GM12878 (cell line): ENCODE measurements at regions of chrX and their contacts with region 1.

Region 1: GRCh38 chrX:41275661-41276609 is 58.0 kb upstream of the DDX3X start:
- DNase-seq: no peak
- ATAC-seq: peak; percentile 92
- H3K4me3 ChIP-seq: peak overlapping the region; percentile 61
- H3K27ac ChIP-seq: peak overlapping the region; percentile 30
- H3K4me1 ChIP-seq: no peaks in the 10 kb centered on the region
- H3K27me3 ChIP-seq: no peaks in the 10 kb centered on the region
- CTCF ChIP-seq: peak; percentile 51 to 70 (median 70)
- EP300 ChIP-seq: no peak
- POLR2A ChIP-seq: peak; percentile 36; the same call in 1 of the 2 replicates
- RAD21 ChIP-seq: peak; percentile 59

Region 2: DNA sequence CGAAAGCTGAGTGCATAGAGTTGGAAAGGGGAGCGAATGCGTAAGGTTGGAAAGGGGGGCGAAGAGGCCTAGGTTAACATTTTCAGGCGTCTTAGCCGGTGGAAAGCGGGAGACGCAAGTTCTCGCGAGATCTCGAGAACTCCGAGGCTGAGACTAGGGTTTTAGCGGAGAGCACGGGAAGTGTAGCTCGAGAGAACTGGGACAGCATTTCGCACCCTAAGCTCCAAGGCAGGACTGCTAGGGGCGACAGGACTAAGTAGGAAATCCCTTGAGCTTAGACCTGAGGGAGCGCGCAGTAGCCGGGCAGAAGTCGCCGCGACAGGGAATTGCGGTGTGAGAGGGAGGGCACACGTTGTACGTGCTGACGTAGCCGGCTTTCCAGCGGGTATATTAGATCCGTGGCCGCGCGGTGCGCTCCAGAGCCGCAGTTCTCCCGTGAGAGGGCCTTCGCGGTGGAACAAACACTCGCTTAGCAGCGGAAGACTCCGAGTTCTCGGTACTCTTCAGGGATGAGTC is 57.9 kb after region 1 on chrX and contains the start of gene DDX3X:
- CTCF ChIA-PET with region 1: interaction called, 4 read pairs
- POLR2A ChIA-PET with region 1: interaction called, 4 read pairs
- RAD21 ChIA-PET with region 1: no interaction called
- SMC1A ChIA-PET with region 1: interaction called, 4 read pairs
- in situ Hi-C with region 1: no loop called
- intact Hi-C with region 1: loop called (anchors 5 kb)
- DNase-seq: peak; percentile 91
- ATAC-seq: peak; percentile 72
- H3K4me3 ChIP-seq: peak within 1 kb of the TSS; percentile 91
- H3K27ac ChIP-seq: peak within 1 kb of the TSS; percentile 99
- H3K4me1 ChIP-seq: peaks cover 10% of the 10 kb centered on the region
- H3K27me3 ChIP-seq: no peaks in the 10 kb centered on the region; a peak in 1 of 4 replicates
- CTCF ChIP-seq: peak; percentile 19 to 37 (median 29); a peak in 5 of 6 replicates
- EP300 ChIP-seq: peak in 1 of 2 experiments; percentile 4; a peak in 1 of 4 replicates
- POLR2A ChIP-seq: no peak; the same call in none of the 2 replicates
- RAD21 ChIP-seq: 0 out of 2 replicates have a peak, but pooled peaks have one; percentile 3
- polyA plus RNA-seq, gene DDX3X: 52.0 to 56.7 TPM

Region 3: DNA sequence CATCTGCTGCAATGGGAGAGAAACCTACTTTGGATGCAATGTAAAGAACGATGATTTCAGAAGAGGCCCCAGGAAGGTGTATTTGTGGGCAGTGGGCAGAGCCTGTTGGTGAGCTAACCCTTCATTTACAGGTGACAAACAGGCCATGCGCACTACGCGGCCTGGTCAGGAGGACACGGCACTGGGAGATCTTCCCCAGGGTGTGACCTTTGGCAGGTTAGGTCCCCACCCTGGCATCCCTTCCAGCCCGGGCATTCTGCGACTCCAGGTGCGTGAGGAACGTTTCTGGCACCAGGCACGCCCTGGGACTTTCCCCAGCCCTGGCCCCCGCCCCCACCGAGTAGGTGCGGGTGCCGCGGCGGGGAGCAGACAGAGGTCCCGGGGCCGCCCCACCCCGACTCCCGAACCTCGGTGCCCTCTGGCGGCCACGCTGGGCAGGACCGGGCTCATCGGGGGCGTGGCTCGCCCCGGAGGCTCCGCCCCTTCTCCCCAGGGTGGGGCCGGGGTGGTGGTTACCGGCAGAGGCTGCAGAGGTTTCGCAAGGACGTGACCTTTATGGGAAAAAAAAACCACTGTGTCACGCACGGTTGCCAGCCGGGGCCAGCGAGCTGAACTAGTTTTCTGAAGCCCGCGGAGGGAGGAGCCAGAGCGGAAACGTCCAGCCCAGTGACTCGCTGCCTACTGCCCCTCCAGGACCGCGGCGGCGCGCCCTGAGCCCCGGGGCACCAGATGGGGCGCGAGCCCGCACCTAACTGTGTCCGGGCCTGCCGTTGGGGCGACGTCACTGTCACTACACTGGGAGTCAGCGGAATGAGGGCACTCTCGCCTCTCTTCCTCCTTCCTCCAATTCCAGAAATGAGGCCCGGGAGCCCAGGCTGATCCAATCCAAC is 166.2 kb after region 1 on chrX:
- CTCF ChIA-PET with region 1: interaction called, 3 read pairs
- POLR2A ChIA-PET with region 1: interaction called, 4 read pairs
- RAD21 ChIA-PET with region 1: no interaction called
- SMC1A ChIA-PET with region 1: interaction called, 3 read pairs
- in situ Hi-C with region 1: no loop called
- intact Hi-C with region 1: loop called (anchors 1 kb)
- DNase-seq: peak; percentile 68
- ATAC-seq: peak; percentile 87
- H3K4me3 ChIP-seq: peak overlapping the region; percentile 63
- H3K27ac ChIP-seq: peak overlapping the region; percentile 70
- H3K4me1 ChIP-seq: peaks cover 13% of the 10 kb centered on the region; the same call in 1 of the 2 replicates
- H3K27me3 ChIP-seq: no peaks in the 10 kb centered on the region
- CTCF ChIP-seq: peak; percentile 54 to 71 (median 66)
- EP300 ChIP-seq: no peak; a peak in 1 of 4 replicates
- POLR2A ChIP-seq: peak; percentile 50
- RAD21 ChIP-seq: peak; percentile 58

Region 4: GRCh38 chrX:41759817-41760216 is 483.9 kb after region 1 on chrX:
- CTCF ChIA-PET with region 1: interaction called, 10 read pairs
- POLR2A ChIA-PET with region 1: no interaction called
- RAD21 ChIA-PET with region 1: interaction called, 6 read pairs
- SMC1A ChIA-PET with region 1: interaction called, 5 read pairs
- in situ Hi-C with region 1: loop called (anchors 10 kb)
- intact Hi-C with region 1: loop called (anchors 5 kb)
- DNase-seq: no peak
- ATAC-seq: peak; percentile 72
- H3K4me3 ChIP-seq: no peak overlapping the region
- H3K27ac ChIP-seq: no peak overlapping the region
- H3K4me1 ChIP-seq: no peaks in the 10 kb centered on the region
- H3K27me3 ChIP-seq: no peaks in the 10 kb centered on the region
- CTCF ChIP-seq: peak; percentile 59 to 67 (median 62)
- EP300 ChIP-seq: no peak
- POLR2A ChIP-seq: no peak
- RAD21 ChIP-seq: peak; percentile 93